Activated naive CD4-positive, alpha-beta T cell treated with anti-CD3 and anti-CD28 coated beads for 36 hours (primary cell): ENCODE measurements at regions of chr1 and their contacts with region 1.

Region 1: DNA sequence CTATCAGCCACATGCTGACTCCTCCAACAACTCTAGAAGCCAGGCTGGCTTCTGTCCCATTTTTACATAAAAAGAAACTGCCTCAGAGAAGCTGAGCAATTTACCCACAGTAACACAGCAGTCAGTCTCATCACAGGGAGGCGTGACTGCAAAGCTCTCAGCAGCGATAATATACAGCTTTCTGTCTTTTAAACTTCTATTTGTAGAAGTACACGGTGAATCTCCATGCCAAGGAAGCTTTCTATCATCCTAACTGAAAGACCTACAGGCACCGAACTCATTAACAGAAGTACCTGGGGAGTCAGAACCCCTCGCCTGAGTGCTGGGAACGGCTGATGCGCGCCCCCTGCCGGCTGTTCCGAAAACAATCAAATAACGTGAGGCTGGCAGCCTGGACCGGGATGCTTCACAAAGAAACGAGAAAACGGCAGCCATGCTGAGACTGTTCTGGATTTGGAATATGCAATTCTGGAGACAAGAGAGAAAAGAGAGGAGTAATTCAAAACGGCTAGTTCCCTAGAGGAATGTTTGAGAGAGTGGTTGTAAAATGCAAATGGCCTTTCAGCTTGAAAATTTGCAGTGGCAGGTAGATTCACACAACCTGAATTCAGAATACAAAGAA is 43.5 kb upstream of the RAB4A start:
- DNase-seq: peak; percentile 85
- H3K4me3 Mint-ChIP-seq: no peak overlapping the region
- H3K27ac Mint-ChIP-seq: no peak overlapping the region
- H3K4me1 Mint-ChIP-seq: peaks cover 21% of the 10 kb centered on the region
- H3K27me3 Mint-ChIP-seq: peaks cover 2% of the 10 kb centered on the region

Region 2: GRCh38 chr1:228664399-228664914 is 563.0 kb before region 1 on chr1:
- CTCF ChIA-PET with region 1: interaction called, 29 read pairs
- intact Hi-C with region 1: loop called (anchors 1 kb)
- DNase-seq: peak; percentile 88
- H3K4me3 Mint-ChIP-seq: no peak overlapping the region
- H3K27ac Mint-ChIP-seq: no peak overlapping the region
- H3K4me1 Mint-ChIP-seq: no peaks in the 10 kb centered on the region
- H3K27me3 Mint-ChIP-seq: no peaks in the 10 kb centered on the region

Region 3: DNA sequence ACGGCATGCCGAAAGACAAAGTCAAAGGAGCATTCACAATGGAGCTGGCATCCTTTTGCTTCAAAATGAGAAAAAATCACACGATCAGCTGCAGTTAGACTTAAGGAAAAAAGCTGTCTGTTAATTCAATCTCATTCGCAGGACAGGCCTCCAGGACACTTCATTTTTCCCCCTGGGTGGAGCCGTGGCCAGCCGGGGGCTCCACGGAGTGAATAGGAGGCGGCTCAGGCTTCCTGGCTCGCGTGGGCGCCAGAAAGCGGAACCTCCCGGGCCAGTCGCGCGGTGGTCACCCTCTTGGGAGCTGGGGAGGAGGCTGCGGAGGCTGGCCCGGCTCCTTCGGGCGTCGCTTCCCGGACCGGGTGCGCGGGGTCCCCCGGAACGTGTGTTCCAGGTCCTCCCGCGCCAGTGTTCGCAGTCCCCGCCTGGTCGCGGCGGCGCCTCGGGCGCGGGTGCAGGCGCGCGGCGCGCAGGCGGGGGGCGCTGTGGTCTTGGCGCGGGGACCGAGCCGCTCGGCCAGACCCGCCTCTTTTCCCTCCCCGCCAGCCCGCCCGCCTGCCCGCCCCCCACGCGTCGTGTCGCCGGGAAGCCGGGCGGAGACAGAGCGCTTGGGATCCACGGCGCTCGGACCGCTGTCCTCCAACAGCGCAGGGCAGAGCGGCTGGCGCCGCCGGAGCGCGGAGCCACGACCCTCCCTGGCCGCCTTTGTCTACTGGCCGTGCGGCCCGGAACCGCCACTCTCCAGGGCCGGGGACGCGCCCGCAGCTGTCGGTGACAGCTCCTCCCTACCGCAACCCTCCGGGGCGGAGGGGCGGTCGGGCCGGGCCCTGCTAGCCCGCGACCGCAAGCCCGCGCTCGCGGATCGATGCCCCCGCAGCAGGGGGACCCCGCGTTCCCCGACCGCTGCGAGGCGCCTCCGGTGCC is 492.3 kb before region 1 on chr1 and contains the start of gene RHOU:
- CTCF ChIA-PET with region 1: interaction called, 18 read pairs
- intact Hi-C with region 1: loop called (anchors 2 kb)
- DNase-seq: peak; percentile 64
- H3K4me3 Mint-ChIP-seq: peak within 1 kb of the TSS; percentile 75
- H3K27ac Mint-ChIP-seq: no peak within 1 kb of the TSS
- H3K4me1 Mint-ChIP-seq: peaks cover 3% of the 10 kb centered on the region
- H3K27me3 Mint-ChIP-seq: peaks cover 5% of the 10 kb centered on the region
- total RNA-seq, gene RHOU: 0.17 to 0.35 TPM

Region 4: DNA sequence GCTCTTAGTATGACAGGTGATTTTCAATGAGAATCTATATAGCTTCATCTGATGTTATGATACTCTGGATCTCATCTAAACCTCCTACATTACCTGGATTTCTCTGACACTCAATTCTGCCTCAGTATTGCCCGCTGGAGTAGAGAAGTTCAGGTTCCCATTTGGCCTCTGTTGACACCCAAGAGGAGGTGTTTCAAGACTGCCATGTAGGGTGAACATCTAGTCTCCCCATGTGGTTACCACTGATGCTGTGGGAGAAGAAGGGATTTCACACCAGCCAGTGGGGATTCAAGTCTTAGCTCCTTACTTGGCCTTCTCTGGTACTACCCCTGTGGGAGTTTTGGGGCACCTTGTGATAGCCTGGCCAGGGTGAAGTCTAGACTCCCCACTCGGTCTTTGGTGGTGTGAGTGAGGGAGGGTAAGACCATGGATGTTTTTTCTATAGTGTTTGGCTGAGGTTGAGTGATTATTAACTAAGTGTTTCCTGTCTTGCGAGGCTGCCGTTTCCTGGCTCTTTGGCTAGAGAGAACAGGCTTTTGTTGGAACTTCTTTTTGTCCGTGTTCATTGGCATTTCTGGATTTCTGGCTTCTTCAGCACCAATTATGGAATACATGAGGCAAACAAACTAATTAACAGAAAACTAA is 401.4 kb before region 1 on chr1:
- CTCF ChIA-PET with region 1: no interaction called
- intact Hi-C with region 1: loop called (anchors 5 kb)
- DNase-seq: no peak
- H3K4me3 Mint-ChIP-seq: no peak overlapping the region
- H3K27ac Mint-ChIP-seq: no peak overlapping the region
- H3K4me1 Mint-ChIP-seq: peaks cover 21% of the 10 kb centered on the region
- H3K27me3 Mint-ChIP-seq: no peaks in the 10 kb centered on the region

Region 5: GRCh38 chr1:229156872-229157271 is 70.5 kb before region 1 on chr1:
- CTCF ChIA-PET with region 1: interaction called, 8 read pairs
- intact Hi-C with region 1: loop called (anchors 2 kb)
- DNase-seq: no peak
- H3K4me3 Mint-ChIP-seq: no peak overlapping the region
- H3K27ac Mint-ChIP-seq: no peak overlapping the region
- H3K4me1 Mint-ChIP-seq: peaks cover 21% of the 10 kb centered on the region
- H3K27me3 Mint-ChIP-seq: no peaks in the 10 kb centered on the region